ENCODE measurements at regions of chr3 and their contacts with region 1.

Region 1: GRCh38 chr3:64224826-64225610 is at the start of gene PRICKLE2:
- DNase-seq: peak; percentile 80 to 86 (median 82)
- ATAC-seq: peak; percentile 63 to 88 (median 77)
- H3K4me3 ChIP-seq: peak within 1 kb of the TSS in 11 of 12 donors; percentile 3 to 57 (median 45)
- H3K27ac ChIP-seq: peak within 1 kb of the TSS; percentile 37 to 85 (median 72)
- H3K4me1 ChIP-seq: peaks cover 2 to 85% (median 56%) of the 10 kb centered on the region in 12 donors
- H3K27me3 ChIP-seq: no peaks in the 10 kb centered on the region
- CTCF ChIP-seq: peak in 6 of 12 donors; percentile 15 to 47 (median 34)
- POLR2A ChIP-seq: no peak
- total RNA-seq, gene PRICKLE2: 4.3 to 15.2 (median 7.8) TPM

Region 2: DNA sequence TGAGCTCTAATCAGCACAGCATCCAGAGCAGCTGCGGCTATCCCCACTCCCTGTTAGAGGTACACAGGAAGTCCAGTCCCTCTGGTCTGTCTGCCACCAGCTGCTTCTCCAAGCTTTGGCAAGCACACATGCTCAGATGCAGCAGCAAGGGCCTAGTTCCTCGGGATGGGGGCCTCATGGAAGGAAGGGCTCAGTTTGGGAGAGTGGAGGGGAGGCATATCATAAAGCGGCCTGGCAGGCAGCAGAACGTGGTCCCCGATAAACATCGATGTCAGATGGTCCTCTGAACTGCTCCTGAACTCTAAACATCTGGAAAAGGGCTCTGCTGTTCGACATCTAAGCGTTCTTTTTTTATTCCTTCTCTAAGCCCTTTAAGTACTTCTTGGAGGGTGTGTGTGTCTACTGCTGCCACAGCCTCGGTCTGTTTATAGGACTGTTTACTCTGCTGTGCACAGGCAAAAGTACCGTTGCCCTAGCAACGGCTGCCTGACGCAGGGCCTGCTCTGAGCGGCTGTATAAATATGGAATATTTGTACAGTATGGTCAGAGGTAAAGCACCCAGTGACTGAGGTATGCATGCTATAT is 74.3 kb before region 1 on chr3:
- intact Hi-C with region 1: no loop called
- DNase-seq: peak; percentile 62 to 88 (median 71)
- ATAC-seq: peak; percentile 93 to 96 (median 94)
- H3K4me3 ChIP-seq: no peak overlapping the region
- H3K27ac ChIP-seq: peak overlapping the region; percentile 36 to 81 (median 71)
- H3K4me1 ChIP-seq: peaks cover 9 to 34% (median 20%) of the 10 kb centered on the region in 12 donors
- H3K27me3 ChIP-seq: no peaks in the 10 kb centered on the region
- CTCF ChIP-seq: no peak
- POLR2A ChIP-seq: no peak

Region 3: GRCh38 chr3:64163755-64164148 is 61.3 kb before region 1 on chr3:
- intact Hi-C with region 1: loop called in 1 of 10 experiments (anchors 5 kb)
- DNase-seq: no peak
- ATAC-seq: no peak
- H3K4me3 ChIP-seq: no peak overlapping the region
- H3K27ac ChIP-seq: peak overlapping the region in 1 of 12 donors; percentile 66
- H3K4me1 ChIP-seq: peaks cover 0 to 58% (median 24%) of the 10 kb centered on the region in 12 donors
- H3K27me3 ChIP-seq: no peaks in the 10 kb centered on the region
- CTCF ChIP-seq: no peak
- POLR2A ChIP-seq: no peak

Region 4: DNA sequence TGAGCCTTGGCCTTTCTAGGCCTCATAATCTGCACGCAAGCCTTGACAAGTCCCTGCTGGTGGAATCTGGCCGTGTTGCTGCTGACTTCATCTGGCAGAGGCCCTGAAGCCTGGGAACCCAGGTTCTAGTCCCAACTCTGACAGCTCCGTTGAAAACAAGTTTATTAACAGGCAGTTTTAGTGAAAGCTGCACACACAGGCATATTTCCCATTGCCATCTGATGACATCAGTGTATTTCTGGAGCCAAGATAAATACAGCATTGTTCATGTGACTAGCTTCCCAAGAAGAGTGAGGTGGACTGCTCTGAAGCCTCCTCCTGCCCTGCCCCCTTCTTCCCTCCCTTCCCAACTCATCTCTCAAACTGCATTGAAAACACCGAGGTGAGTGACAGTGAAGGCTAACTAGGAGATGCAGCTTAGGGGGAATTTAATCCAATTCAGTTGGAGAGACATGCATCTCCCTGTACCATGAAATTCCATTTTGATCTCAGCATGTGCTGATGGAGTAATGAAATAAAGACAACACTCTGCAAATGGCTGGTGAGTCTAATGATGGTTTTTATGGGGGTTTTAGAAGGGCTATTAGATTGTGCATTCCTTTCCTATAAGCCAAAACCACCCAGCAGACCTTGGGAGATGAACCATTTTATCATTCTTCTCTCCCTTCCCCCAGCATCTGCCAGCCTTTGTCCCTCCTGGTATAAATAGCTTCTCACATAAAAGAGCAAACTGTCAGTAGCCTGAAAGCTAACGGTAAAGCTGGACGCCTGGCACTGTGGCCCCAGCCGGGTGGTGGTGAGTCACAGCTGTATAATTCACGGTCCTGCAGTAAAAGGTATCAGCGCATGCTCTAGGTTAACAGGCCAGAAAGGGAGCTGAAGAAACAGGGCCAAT is 37.7 kb before region 1 on chr3:
- intact Hi-C with region 1: loop called in 2 of 10 experiments (anchors 5 kb)
- DNase-seq: peak; percentile 66 to 78 (median 76)
- ATAC-seq: peak; percentile 67 to 88 (median 78)
- H3K4me3 ChIP-seq: no peak overlapping the region
- H3K27ac ChIP-seq: peak overlapping the region in 11 of 12 donors; percentile 38 to 82 (median 66)
- H3K4me1 ChIP-seq: peaks cover 7 to 71% (median 56%) of the 10 kb centered on the region in 12 donors
- H3K27me3 ChIP-seq: no peaks in the 10 kb centered on the region
- CTCF ChIP-seq: peak in 2 of 12 donors; percentile 6 to 16
- POLR2A ChIP-seq: no peak

Measured in heart left ventricle (tissue), 16 donors.